Head of caudate nucleus (tissue), 42 donors: ENCODE measurements at regions of chr10 and their contacts with region 1.

Region 1: GRCh38 chr10:31707093-31708039 is 221.3 kb downstream of the ARHGAP12 start:
- DNase-seq: peak in 41 of 42 donors; percentile 14 to 82 (median 62)

Region 2: GRCh38 chr10:31759799-31760626 is 52.6 kb after region 1 on chr10:
- intact Hi-C with region 1: loop called (anchors 10 kb)
- DNase-seq: peak; percentile 92 to 99 (median 97)

Region 3: DNA sequence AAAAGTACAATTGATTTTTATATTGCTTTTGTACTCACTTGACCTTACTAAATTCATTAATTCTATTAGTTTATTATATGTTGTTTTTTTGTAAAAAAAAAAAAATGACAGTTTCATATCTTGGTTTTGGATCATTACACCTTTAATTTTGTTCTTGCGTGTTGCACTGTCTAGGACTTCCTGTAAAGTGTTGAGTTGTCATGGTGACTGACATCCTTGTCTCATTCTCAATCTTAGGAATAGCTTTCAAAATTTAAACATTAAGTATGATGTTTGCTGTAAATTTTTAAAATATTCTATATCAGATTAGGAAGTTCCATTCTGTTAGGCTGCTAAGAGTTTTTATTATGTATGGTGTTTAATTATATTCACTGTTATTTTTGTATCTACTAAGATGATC is 82.2 kb after region 1 on chr10:
- intact Hi-C with region 1: no loop called
- DNase-seq: no peak

Region 4: GRCh38 chr10:32180371-32181280 is 473.3 kb after region 1 on chr10:
- intact Hi-C with region 1: no loop called
- DNase-seq: no peak